ENCODE measurements at regions of chr5 and their contacts with region 1.

Region 1: DNA sequence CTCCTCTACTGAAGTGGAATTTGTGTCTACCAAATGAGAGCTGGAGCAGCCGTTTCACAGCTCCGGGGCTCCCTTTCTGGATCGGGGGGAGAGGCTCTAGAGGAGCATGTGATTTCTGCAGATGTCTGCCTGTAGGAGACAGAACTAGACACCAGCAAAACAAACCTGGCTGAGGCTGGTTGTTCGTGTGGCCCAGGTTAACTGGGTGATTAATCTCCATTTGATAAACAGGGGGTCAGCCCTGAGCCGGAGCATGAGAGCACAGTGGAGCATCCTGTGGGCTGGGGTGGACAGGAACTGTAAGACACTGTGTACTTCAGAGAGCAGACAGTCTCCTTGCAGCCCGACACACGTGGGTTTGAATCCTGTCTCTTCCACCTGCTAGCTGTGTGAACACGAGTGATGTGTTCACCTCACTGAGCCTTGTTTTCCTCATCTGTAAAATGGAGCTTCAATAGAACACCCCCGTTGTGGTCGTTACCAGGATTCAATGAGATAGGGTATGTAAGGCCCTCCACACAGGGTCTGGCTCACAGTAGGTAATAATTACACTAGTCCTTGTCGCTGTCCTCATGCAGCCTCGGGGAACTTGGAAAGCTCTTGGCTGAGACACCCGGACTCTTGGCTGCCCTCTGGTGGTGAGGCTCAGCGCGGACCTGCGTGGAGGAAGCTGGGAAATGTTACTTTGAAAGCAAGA is 12.9 kb downstream of the CXCL14 start:
- DNase-seq: peak; percentile 50
- ATAC-seq: peak; percentile 77
- H3K4me3 ChIP-seq: no peak overlapping the region
- H3K27ac ChIP-seq: no peak overlapping the region
- H3K4me1 ChIP-seq: peaks cover 0 to 13% of the 10 kb centered on the region in 2 experiments; a peak in 1 of 4 replicates
- H3K27me3 ChIP-seq: no peaks in the 10 kb centered on the region
- CTCF ChIP-seq: peak; percentile 84 to 98 (median 97); a peak in 5 of 6 replicates
- POLR2A ChIP-seq: no peak
- RAD21 ChIP-seq: peak; percentile 71

Region 2: GRCh38 chr5:135729321-135729786 is 163.5 kb after region 1 on chr5:
- CTCF ChIA-PET with region 1: interaction called, 22 read pairs
- POLR2A ChIA-PET with region 1: no interaction called
- RAD21 ChIA-PET with region 1: interaction called in 1 of 2 experiments, 5 read pairs
- intact Hi-C with region 1: loop called (anchors 2 kb)
- DNase-seq: no peak
- ATAC-seq: peak; percentile 63
- H3K4me3 ChIP-seq: no peak overlapping the region
- H3K27ac ChIP-seq: no peak overlapping the region
- H3K4me1 ChIP-seq: no peaks in the 10 kb centered on the region
- H3K27me3 ChIP-seq: no peaks in the 10 kb centered on the region
- CTCF ChIP-seq: peak; percentile 35 to 46 (median 41); a peak in 4 of 6 replicates
- POLR2A ChIP-seq: no peak
- RAD21 ChIP-seq: peak; percentile 54

Region 3: GRCh38 chr5:135829681-135830383 is 264.0 kb after region 1 on chr5:
- CTCF ChIA-PET with region 1: interaction called, 38 read pairs
- POLR2A ChIA-PET with region 1: interaction called, 4 read pairs
- RAD21 ChIA-PET with region 1: interaction called in 1 of 2 experiments, 3 read pairs
- intact Hi-C with region 1: loop called (anchors 2 kb)
- DNase-seq: peak; percentile 63
- ATAC-seq: peak; percentile 69
- H3K4me3 ChIP-seq: no peak overlapping the region
- H3K27ac ChIP-seq: no peak overlapping the region
- H3K4me1 ChIP-seq: peaks cover 0 to 13% of the 10 kb centered on the region in 2 experiments; a peak in 1 of 4 replicates
- H3K27me3 ChIP-seq: no peaks in the 10 kb centered on the region
- CTCF ChIP-seq: peak; percentile 83 to 92 (median 91)
- POLR2A ChIP-seq: no peak
- RAD21 ChIP-seq: peak; percentile 90